Left cardiac atrium (tissue), 4 donors: ENCODE measurements at regions of chr6 and their contacts with region 1.

Region 1: GRCh38 chr6:30742316-30743098 is at the start of gene FLOT1:
- DNase-seq: peak; percentile 98
- ATAC-seq: peak; percentile 89
- total RNA-seq, gene FLOT1: 170 to 179 TPM

Region 2: DNA sequence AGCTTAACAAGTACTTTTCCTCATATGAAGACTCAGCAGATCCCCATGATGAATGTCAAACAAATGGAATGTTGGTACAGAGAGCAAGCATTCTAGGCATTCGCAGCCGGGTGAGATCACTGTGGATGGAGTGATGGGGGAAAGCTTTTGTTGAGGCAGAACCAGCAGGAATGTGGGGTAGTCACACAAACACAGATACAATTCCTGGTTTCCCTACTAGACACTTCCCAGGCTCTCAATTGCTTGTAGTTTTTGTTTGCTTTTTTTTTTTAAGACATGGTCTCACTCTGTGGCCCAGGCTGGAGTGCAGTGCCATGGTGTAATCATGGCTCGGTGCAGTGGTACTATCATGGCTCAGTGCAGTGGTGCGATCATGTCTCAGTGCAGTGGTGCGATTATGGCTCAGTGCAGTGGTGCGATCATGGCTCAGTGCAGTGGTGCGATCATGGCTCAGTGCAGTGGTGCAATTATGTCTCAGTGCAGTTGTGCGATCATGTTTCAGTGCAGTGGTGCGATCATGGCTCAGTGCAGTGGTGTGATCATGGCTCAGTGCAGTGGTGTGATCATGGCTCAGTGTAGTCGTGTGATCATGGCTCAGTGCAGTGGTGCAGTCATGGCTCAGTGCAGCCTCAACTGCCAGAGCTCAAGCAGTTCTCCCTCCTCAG is 17.2 kb after region 1 on chr6:
- intact Hi-C with region 1: no loop called
- DNase-seq: no peak
- ATAC-seq: peak; percentile 65 to 69

Region 3: GRCh38 chr6:30781743-30782424 is 39.4 kb after region 1 on chr6:
- intact Hi-C with region 1: loop called in 1 of 2 experiments (anchors 2 kb)
- DNase-seq: peak; percentile 97
- ATAC-seq: peak; percentile 89 to 91

Region 4: DNA sequence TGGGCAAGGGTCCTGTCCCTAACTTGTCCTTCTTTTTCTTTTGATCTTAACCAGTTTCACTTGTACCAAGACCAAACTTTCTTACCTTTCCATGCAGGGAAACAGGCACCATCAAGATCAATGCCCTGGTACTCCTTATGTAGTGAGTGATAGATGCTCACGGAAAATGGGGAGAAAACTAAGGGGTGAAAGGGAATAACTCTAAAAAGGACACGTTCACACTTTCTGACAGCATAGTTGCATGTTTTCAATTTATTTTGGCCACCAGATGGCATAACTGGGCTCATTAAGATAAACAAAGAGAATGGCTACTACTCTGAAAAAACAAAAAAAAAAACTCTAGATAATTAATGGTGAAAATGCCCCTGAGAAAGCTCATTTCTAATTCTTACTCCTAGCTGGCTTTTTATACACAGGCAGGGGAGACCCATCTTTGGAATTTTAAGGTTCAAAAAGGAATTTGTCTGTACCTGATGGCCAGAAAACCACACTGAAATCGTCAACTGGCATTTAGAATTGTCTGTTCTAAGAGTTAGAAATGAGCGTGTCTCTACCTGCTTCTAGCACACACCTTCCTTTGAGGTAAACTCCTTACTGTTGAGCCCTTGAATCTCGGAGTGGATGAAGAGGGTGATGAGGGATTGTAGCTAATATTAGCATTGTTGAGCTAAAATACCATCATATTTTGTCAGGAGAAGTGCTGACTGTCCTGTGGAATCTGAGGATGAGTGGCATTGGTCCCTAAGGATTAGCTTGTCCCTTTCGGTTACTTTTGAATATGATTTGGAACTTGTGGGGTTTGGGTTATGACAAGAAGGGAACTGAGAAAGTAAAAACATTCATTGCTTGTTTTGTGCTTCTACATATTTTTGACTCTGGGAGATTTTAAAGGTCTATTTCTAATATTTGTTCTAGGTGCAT is 79.6 kb after region 1 on chr6:
- intact Hi-C with region 1: loop called (anchors 5 to 10 kb)
- DNase-seq: no peak
- ATAC-seq: peak in 1 of 2 donors; percentile 8

Region 5: GRCh38 chr6:30877419-30878371 is 135.2 kb after region 1 on chr6:
- intact Hi-C with region 1: loop called in 1 of 2 experiments (anchors 5 kb)
- DNase-seq: peak; percentile 93
- ATAC-seq: peak; percentile 86 to 88